ENCODE measurements at regions of chr18 and their contacts with region 1.

Region 1: GRCh38 chr18:56748698-56749268 is 97.6 kb downstream of the WDR7 start:
- DNase-seq: peak; percentile 57
- ATAC-seq: peak; percentile 57; the same call in 1 of the 2 replicates
- H3K4me3 ChIP-seq: no peak overlapping the region
- H3K27ac ChIP-seq: no peak overlapping the region
- H3K4me1 ChIP-seq: no peaks in the 10 kb centered on the region
- H3K27me3 ChIP-seq: no peaks in the 10 kb centered on the region
- CTCF ChIP-seq: peak; percentile 75
- POLR2A ChIP-seq: no peak
- RAD21 ChIP-seq: peak; percentile 82

Region 2: GRCh38 chr18:55907453-55908175 is 841.2 kb before region 1 on chr18:
- CTCF ChIA-PET with region 1: no interaction called
- POLR2A ChIA-PET with region 1: no interaction called
- dilution Hi-C with region 1: no loop called
- in situ Hi-C with region 1: no loop called
- intact Hi-C with region 1: no loop called
- DNase-seq: peak; percentile 13
- ATAC-seq: peak; percentile 27; the same call in 1 of the 2 replicates
- H3K4me3 ChIP-seq: no peak overlapping the region
- H3K27ac ChIP-seq: no peak overlapping the region
- H3K4me1 ChIP-seq: no peaks in the 10 kb centered on the region
- H3K27me3 ChIP-seq: no peaks in the 10 kb centered on the region
- CTCF ChIP-seq: no peak
- POLR2A ChIP-seq: no peak
- RAD21 ChIP-seq: no peak

Region 3: DNA sequence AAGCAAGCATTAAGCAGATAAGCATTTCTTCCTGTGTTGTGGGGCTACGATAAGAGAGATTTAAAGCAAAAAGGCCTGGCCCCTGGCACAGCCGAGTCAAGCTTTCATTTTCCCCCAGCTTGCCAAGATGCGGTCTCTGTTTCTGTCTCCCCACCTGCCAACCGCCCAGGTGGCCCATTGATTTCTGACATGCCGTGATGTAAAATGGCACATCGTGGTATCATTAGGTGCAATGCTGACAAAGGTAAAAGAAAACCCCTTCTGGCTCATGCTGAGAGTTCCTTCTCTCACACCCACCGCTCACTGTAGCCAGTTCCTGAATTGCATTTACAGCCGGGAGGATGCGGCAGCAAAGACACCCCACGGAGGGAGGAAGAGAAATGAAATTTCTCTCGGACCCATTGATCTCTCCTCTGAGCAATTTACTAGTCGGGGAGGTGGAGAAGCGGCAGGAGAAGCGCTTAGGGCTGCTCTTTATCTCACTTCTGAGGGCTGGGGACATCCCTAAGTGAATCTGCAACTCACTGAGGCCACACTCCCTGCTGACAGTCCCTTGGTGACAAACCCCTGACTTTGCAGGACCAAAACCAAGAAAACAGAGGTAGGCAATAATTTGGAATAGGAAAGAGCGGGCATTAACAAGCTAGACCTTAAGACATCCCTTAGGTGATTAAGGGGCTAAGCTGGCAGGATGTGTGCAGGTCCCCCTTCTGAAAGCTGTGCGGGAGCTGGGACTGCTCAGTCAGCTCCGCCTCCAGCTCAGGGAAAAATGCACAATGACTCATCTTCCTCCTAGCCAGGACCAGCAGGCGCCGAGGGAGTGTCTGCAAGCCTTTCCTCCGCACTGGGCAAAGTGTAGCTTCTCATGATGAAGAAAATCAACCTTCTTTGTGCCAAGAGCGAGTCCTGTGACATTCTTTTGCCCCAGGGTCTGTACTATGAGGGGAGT is 461.2 kb after region 1 on chr18:
- CTCF ChIA-PET with region 1: no interaction called
- POLR2A ChIA-PET with region 1: no interaction called
- dilution Hi-C with region 1: no loop called
- in situ Hi-C with region 1: no loop called
- intact Hi-C with region 1: loop called (anchors 10 kb)
- DNase-seq: peak; percentile 70
- ATAC-seq: peak; percentile 100
- H3K4me3 ChIP-seq: no peak overlapping the region
- H3K27ac ChIP-seq: no peak overlapping the region
- H3K4me1 ChIP-seq: no peaks in the 10 kb centered on the region
- H3K27me3 ChIP-seq: peaks cover 5% of the 10 kb centered on the region
- CTCF ChIP-seq: no peak
- POLR2A ChIP-seq: no peak
- RAD21 ChIP-seq: no peak

Region 4: GRCh38 chr18:57446322-57446721 is 697.5 kb after region 1 on chr18:
- CTCF ChIA-PET with region 1: no interaction called
- POLR2A ChIA-PET with region 1: interaction called, 3 read pairs
- dilution Hi-C with region 1: no loop called
- in situ Hi-C with region 1: loop called (anchors 10 kb)
- intact Hi-C with region 1: loop called (anchors 5 kb)
- DNase-seq: peak; percentile 4
- ATAC-seq: no peak
- H3K4me3 ChIP-seq: no peak overlapping the region
- H3K27ac ChIP-seq: no peak overlapping the region
- H3K4me1 ChIP-seq: no peaks in the 10 kb centered on the region
- H3K27me3 ChIP-seq: peaks cover 25% of the 10 kb centered on the region
- CTCF ChIP-seq: peak; percentile 39; the same call in 1 of the 2 replicates
- POLR2A ChIP-seq: no peak
- RAD21 ChIP-seq: peak; percentile 57

Region 5: DNA sequence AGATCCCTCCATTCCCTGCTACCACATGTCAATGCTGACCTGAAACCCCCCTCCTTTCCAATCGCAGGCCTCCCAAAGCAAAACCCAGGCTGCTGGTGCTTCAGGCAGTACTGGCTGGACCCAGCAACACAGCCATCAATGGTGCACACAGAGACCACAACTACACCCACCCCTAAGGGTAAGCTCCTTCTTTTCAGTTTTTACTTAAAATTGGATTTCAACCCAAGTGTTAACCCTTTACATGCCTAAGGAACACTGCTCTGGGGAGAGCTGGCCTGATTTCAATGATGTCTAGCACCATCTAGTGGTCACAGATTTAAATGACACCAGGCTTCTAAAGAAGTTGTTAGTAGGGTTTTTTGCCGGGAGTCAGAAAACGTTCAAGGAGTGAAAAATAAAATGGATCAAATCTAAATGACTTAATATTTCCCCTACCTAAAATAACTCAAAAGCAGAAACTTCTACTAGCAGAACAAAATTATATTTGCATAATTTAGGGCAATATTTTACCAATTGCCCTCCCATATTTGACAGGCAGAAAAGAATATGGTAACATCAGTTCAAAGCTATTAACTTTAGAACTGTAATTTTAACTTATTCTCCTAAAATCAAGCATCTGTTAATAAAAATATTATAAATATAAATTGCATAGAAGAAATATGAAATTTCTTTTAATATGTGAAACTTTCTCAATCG is 813.1 kb after region 1 on chr18:
- CTCF ChIA-PET with region 1: no interaction called
- POLR2A ChIA-PET with region 1: no interaction called
- dilution Hi-C with region 1: no loop called
- in situ Hi-C with region 1: loop called (anchors 5 kb)
- intact Hi-C with region 1: loop called (anchors 1 kb)
- DNase-seq: peak; percentile 55
- ATAC-seq: peak; percentile 73
- H3K4me3 ChIP-seq: no peak overlapping the region
- H3K27ac ChIP-seq: no peak overlapping the region
- H3K4me1 ChIP-seq: no peaks in the 10 kb centered on the region; the same call in 1 of the 2 replicates
- H3K27me3 ChIP-seq: no peaks in the 10 kb centered on the region
- CTCF ChIP-seq: peak; percentile 70
- POLR2A ChIP-seq: no peak
- RAD21 ChIP-seq: peak; percentile 67